Heart right ventricle (tissue), 16 donors: ENCODE measurements at regions of chr1 and their contacts with region 1.

Region 1: GRCh38 chr1:187985897-187986654 is 1157.3 kb downstream of the PLA2G4A start:
- DNase-seq: no peak
- ATAC-seq: no peak
- H3K4me3 ChIP-seq: no peak overlapping the region
- H3K27ac ChIP-seq: no peak overlapping the region
- H3K4me1 ChIP-seq: no peaks in the 10 kb centered on the region
- H3K27me3 ChIP-seq: no peaks in the 10 kb centered on the region
- CTCF ChIP-seq: no peak

Region 2: GRCh38 chr1:187476671-187477070 is 509.4 kb before region 1 on chr1:
- intact Hi-C with region 1: loop called in 1 of 10 experiments (anchors 10 kb)
- DNase-seq: no peak
- ATAC-seq: no peak
- H3K4me3 ChIP-seq: no peak overlapping the region
- H3K27ac ChIP-seq: no peak overlapping the region
- H3K4me1 ChIP-seq: no peaks in the 10 kb centered on the region
- H3K27me3 ChIP-seq: no peaks in the 10 kb centered on the region
- CTCF ChIP-seq: peak in 7 of 9 donors; percentile 20 to 48 (median 30)